Calu3 (cell line): ENCODE measurements at regions of chr2 and their contacts with region 1.

Region 1: GRCh38 chr2:65504813-65505711 is 72.7 kb upstream of the SPRED2 start:
- DNase-seq: peak; percentile 65
- H3K4me3 Mint-ChIP-seq: no peak overlapping the region
- H3K27ac Mint-ChIP-seq: no peak overlapping the region
- H3K4me1 Mint-ChIP-seq: peaks cover 23% of the 10 kb centered on the region
- H3K27me3 Mint-ChIP-seq: no peaks in the 10 kb centered on the region
- CTCF ChIP-seq: no peak

Region 2: DNA sequence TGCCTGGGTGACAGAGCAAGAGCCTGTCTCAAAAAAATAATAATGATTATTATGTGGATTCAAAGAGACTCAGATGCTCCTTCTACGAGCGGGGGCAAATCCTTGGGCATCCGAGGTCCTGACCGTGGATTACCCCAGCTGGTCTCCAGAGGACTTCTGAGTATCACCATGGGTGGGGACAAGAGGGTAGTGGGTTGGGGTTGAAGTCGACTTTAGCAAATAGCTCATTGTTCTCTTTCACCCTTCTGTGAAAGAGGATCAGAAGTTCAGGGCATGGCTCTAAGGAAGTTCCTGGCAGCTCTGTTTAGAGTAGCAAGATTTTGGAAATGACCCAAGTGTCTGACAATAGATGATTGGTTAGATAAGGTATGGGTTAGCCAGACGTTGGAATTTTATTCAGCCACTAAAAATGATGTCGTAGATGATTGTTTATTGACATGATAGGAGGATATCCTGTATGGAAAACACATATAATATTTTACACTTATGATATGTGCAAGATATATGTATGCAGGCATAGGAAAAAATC is 13.6 kb before region 1 on chr2:
- CTCF ChIA-PET with region 1: interaction called, 6 read pairs
- intact Hi-C with region 1: loop called (anchors 1 kb)
- DNase-seq: peak; percentile 11
- H3K4me3 Mint-ChIP-seq: no peak overlapping the region
- H3K27ac Mint-ChIP-seq: peak overlapping the region; percentile 44
- H3K4me1 Mint-ChIP-seq: peaks cover 7% of the 10 kb centered on the region
- H3K27me3 Mint-ChIP-seq: no peaks in the 10 kb centered on the region
- CTCF ChIP-seq: no peak